ENCODE measurements at regions of chr7 and their contacts with region 1.

Region 1: GRCh38 chr7:151631968-151632749 is 112.5 kb upstream of the RHEB start:
- DNase-seq: peak; percentile 77
- H3K4me3 Mint-ChIP-seq: peak overlapping the region; percentile 84
- H3K27ac Mint-ChIP-seq: peak overlapping the region; percentile 84
- H3K4me1 Mint-ChIP-seq: peaks cover 48% of the 10 kb centered on the region
- H3K27me3 Mint-ChIP-seq: no peaks in the 10 kb centered on the region
- CTCF ChIP-seq: peak; percentile 21

Region 2: DNA sequence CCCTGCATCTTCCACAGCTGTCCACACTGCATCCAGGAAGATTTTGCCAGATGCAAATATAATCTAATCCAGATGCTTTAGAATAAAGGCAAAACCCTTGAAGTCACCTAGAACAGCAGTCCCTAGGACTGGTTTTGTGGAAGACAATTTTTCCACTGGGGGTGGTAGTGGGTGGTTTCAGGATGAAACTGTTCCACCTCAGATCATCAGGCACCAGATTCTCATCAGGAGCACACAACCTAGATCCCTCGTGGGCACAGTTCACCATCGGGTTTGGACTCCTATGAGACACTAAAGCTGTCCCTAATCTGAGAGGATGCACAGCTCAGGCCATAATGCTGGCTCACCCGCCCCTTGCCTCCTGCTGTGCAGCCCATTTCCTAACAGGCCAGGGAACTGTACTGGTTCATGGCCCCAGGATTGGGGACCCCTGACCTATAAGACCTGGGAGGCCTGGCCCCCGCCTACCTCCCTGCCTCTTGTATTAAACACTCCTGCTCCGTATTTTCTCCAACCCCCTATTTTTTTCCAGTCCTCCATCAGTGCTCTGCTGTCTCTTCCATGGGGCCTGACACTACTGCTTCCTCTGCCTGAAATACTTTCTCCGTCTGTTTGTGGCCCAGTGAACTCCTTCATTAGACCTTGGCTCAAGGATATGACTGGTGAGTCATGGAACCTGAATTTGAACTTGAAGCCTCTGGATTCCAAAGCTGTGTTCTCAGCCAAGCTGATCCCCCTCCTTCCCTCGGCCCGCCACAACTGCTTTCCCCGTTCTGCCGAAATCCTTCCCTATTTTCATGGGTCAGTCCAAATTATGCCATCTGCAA is 32.5 kb before region 1 on chr7:
- CTCF ChIA-PET with region 1: interaction called, 7 read pairs
- POLR2A ChIA-PET with region 1: interaction called, 37 read pairs
- intact Hi-C with region 1: no loop called
- DNase-seq: peak; percentile 87
- H3K4me3 Mint-ChIP-seq: peak overlapping the region; percentile 18
- H3K27ac Mint-ChIP-seq: peak overlapping the region; percentile 68
- H3K4me1 Mint-ChIP-seq: peaks cover 58% of the 10 kb centered on the region
- H3K27me3 Mint-ChIP-seq: no peaks in the 10 kb centered on the region
- CTCF ChIP-seq: no peak

Region 3: DNA sequence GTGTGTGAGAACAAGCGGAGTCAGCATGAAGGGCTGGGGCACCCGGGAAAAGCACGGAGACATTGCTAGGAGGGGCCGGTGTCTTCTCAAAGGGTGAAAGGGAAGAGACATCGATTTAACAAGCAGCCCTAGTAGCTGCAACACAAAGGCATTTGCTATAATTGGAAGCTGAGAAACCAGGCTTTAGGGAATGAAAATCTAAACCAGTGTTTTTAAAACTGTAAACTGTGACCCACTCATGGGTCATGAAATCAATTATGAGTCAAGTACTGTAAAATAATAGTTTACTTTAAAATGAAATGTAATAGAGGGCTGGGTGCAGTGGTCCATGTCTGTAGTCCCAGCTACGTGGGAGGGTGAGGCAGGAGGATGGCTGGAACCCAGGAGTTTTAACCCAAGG is 16.3 kb after region 1 on chr7:
- CTCF ChIA-PET with region 1: interaction called, 26 read pairs
- POLR2A ChIA-PET with region 1: interaction called, 83 read pairs
- intact Hi-C with region 1: no loop called
- DNase-seq: no peak
- H3K4me3 Mint-ChIP-seq: no peak overlapping the region
- H3K27ac Mint-ChIP-seq: no peak overlapping the region
- H3K4me1 Mint-ChIP-seq: peaks cover 29% of the 10 kb centered on the region
- H3K27me3 Mint-ChIP-seq: no peaks in the 10 kb centered on the region
- CTCF ChIP-seq: no peak

Region 4: GRCh38 chr7:151680721-151681209 is 48.6 kb after region 1 on chr7:
- CTCF ChIA-PET with region 1: interaction called, 6 read pairs
- POLR2A ChIA-PET with region 1: interaction called, 17 read pairs
- intact Hi-C with region 1: no loop called
- DNase-seq: peak; percentile 86
- H3K4me3 Mint-ChIP-seq: peak overlapping the region; percentile 62
- H3K27ac Mint-ChIP-seq: peak overlapping the region; percentile 98
- H3K4me1 Mint-ChIP-seq: peaks cover 40% of the 10 kb centered on the region
- H3K27me3 Mint-ChIP-seq: no peaks in the 10 kb centered on the region
- CTCF ChIP-seq: no peak

Region 5: DNA sequence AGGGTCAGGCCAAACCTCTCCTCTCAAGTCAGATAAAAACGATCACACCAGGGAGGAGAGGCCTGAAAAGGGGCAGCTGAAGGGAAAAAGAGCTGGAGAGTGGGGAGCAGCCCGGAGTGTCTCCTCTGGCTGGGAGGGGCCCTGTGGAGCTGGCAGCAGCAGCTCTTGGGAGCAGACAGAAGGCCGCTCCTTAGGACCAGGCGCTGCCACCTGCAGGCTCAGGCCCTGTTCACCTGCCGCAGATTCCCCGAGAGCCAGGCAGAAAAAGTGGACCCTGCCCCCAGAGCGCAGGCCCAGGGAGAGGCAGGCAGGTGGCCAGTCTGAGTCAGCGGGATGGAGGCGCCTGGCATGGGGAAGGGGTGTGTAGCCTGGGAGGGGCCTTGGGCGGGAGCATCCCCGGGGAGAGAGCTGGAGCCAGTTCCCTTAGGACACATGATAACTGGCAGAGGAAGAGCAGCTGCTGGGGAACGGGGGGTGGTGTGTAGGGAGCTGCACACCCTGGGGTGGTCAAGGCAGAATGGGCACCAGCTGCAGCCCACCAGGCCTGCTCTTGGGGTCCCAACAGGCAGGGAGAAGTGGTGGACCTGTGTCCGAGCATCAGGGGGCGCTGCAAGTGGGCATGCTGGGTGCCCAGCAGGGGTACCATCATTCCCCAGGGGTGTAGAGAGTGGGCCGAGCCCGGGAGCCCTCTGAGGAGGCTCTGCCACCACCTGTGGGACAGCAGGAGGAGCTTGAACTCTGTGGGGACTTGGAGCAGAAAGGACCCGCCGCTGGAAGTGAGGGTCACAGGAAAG is 64.8 kb after region 1 on chr7:
- CTCF ChIA-PET with region 1: interaction called, 10 read pairs
- POLR2A ChIA-PET with region 1: interaction called, 49 read pairs
- intact Hi-C with region 1: loop called (anchors 2 kb)
- DNase-seq: peak; percentile 87
- H3K4me3 Mint-ChIP-seq: no peak overlapping the region
- H3K27ac Mint-ChIP-seq: peak overlapping the region; percentile 26
- H3K4me1 Mint-ChIP-seq: peaks cover 34% of the 10 kb centered on the region
- H3K27me3 Mint-ChIP-seq: no peaks in the 10 kb centered on the region
- CTCF ChIP-seq: no peak

Region 6: DNA sequence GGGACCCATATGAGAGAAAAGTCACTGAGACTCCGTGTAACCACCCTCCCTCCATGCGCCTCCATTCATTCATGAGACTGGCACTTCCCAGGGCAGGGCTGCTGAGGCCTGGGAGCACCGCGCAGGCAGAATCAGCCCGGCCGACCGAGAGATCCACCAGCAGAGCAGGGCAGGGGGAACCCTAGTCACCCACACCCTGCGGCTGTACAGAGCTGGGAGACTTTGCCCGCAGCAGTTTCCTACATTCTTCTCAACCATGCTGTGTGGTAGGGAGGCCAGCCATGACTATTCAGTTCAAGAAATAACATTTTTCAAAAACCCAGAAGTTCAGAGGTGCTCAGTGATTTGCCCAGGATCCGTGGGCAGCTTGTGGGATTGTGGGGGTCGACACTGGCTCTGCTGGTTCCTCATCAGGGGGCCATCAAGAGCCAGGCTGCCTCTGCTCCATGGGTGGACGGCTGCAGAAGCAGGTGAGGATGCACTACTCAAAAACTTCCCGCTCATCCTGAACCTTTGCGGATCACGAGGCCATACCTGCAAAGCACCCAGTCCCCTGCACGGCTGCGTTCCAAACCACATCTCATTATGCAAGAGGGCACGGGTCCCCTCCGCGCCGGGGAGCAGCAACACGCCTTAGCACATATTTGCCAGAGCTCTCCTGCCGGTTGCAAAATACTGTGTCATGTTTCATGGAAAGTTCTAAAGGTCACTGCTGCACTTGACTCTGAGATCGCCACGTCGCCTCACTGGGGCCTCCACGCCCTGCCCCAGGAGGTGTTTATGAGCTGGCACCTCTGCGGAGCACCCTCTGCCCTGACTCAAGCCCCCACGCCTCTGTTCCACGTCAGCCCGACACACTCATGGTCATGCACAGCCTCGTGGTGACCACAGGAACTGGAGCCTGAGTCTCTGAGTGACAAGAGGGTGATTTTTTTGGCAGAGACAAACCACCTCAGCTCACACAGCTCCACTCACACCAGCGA is 112.8 kb after region 1 on chr7:
- CTCF ChIA-PET with region 1: interaction called, 22 read pairs
- POLR2A ChIA-PET with region 1: interaction called, 19 read pairs
- intact Hi-C with region 1: no loop called
- DNase-seq: peak; percentile 96
- H3K4me3 Mint-ChIP-seq: peak overlapping the region; percentile 63
- H3K27ac Mint-ChIP-seq: peak overlapping the region; percentile 91
- H3K4me1 Mint-ChIP-seq: peaks cover 19% of the 10 kb centered on the region
- H3K27me3 Mint-ChIP-seq: no peaks in the 10 kb centered on the region
- CTCF ChIP-seq: peak; percentile 47

Region 7: GRCh38 chr7:151759591-151760042 is 127.5 kb after region 1 on chr7:
- CTCF ChIA-PET with region 1: interaction called, 22 read pairs
- POLR2A ChIA-PET with region 1: interaction called, 25 read pairs
- intact Hi-C with region 1: loop called (anchors 2 kb)
- DNase-seq: peak; percentile 78
- H3K4me3 Mint-ChIP-seq: no peak overlapping the region
- H3K27ac Mint-ChIP-seq: no peak overlapping the region
- H3K4me1 Mint-ChIP-seq: peaks cover 21% of the 10 kb centered on the region
- H3K27me3 Mint-ChIP-seq: no peaks in the 10 kb centered on the region
- CTCF ChIP-seq: peak; percentile 83

Measured in MCF 10A (cell line).